ENCODE measurements at regions of chr15 and their contacts with region 1.

Region 1: GRCh38 chr15:90001683-90002427 is 731 bp downstream of the ZNF710 start:
- DNase-seq: peak; percentile 53
- H3K4me3 Mint-ChIP-seq: peak overlapping the region; percentile 85
- H3K27ac Mint-ChIP-seq: peak overlapping the region; percentile 86
- H3K4me1 Mint-ChIP-seq: peaks cover 53% of the 10 kb centered on the region
- H3K27me3 Mint-ChIP-seq: peaks cover 11% of the 10 kb centered on the region

Region 2: GRCh38 chr15:89416141-89416853 is 585.6 kb before region 1 on chr15:
- intact Hi-C with region 1: no loop called
- DNase-seq: peak; percentile 64
- H3K4me3 Mint-ChIP-seq: no peak overlapping the region
- H3K27ac Mint-ChIP-seq: no peak overlapping the region
- H3K4me1 Mint-ChIP-seq: peaks cover 10% of the 10 kb centered on the region
- H3K27me3 Mint-ChIP-seq: peaks cover 75% of the 10 kb centered on the region

Region 3: GRCh38 chr15:89750560-89751542 is 251.0 kb before region 1 on chr15 and contains the start of gene MESP1:
- intact Hi-C with region 1: loop called (anchors 5 kb)
- DNase-seq: peak; percentile 84
- H3K4me3 Mint-ChIP-seq: peak within 1 kb of the TSS; percentile 84
- H3K27ac Mint-ChIP-seq: peak within 1 kb of the TSS; percentile 23
- H3K4me1 Mint-ChIP-seq: no peaks in the 10 kb centered on the region
- H3K27me3 Mint-ChIP-seq: peaks cover 29% of the 10 kb centered on the region
- total RNA-seq, gene MESP1: 4.6 and 6.6 TPM in 2 replicates

Region 4: GRCh38 chr15:90013503-90013937 is 11.7 kb after region 1 on chr15:
- intact Hi-C with region 1: loop called (anchors 1 kb)
- DNase-seq: peak; percentile 36
- H3K4me3 Mint-ChIP-seq: peak overlapping the region; percentile 27
- H3K27ac Mint-ChIP-seq: peak overlapping the region; percentile 61
- H3K4me1 Mint-ChIP-seq: peaks cover 50% of the 10 kb centered on the region
- H3K27me3 Mint-ChIP-seq: no peaks in the 10 kb centered on the region

Region 5: GRCh38 chr15:90037961-90038631 is 36.2 kb after region 1 on chr15:
- intact Hi-C with region 1: loop called (anchors 1 kb)
- DNase-seq: peak; percentile 48
- H3K4me3 Mint-ChIP-seq: peak overlapping the region; percentile 63
- H3K27ac Mint-ChIP-seq: peak overlapping the region; percentile 89
- H3K4me1 Mint-ChIP-seq: peaks cover 77% of the 10 kb centered on the region
- H3K27me3 Mint-ChIP-seq: no peaks in the 10 kb centered on the region

Region 6: GRCh38 chr15:90059208-90059985 is 57.5 kb after region 1 on chr15:
- intact Hi-C with region 1: loop called (anchors 2 kb)
- DNase-seq: peak; percentile 69
- H3K4me3 Mint-ChIP-seq: peak overlapping the region; percentile 35
- H3K27ac Mint-ChIP-seq: peak overlapping the region; percentile 85
- H3K4me1 Mint-ChIP-seq: peaks cover 25% of the 10 kb centered on the region
- H3K27me3 Mint-ChIP-seq: no peaks in the 10 kb centered on the region

Region 7: DNA sequence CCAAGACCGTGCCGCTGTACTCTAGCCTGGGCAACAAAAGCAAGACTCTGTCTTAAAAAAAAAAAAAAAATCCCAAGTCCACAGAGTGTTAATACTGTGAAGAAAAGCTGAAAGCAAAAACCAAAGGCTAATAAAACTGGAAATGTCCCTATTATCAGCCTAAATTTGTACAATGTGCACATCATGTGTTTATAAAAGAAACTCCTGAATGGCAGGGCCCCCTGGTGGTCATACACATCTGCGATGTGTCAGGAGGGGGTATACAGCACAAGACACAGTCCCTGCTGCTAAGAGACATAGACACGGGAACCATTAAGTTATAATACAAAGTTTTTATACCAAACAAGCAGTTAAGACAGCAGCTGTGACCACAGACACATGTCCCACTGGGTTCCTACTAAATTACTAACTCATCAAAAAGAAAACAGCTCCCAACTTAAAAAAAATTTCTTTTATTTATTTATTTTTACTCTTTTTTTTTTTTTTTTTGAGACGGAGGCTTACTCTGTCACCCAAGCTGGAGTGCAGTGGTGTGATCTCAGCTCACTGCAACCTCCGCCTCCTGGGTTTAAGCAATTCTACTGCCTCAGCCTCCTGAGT is 69.5 kb after region 1 on chr15:
- intact Hi-C with region 1: loop called (anchors 1 kb)
- DNase-seq: peak; percentile 63
- H3K4me3 Mint-ChIP-seq: no peak overlapping the region
- H3K27ac Mint-ChIP-seq: peak overlapping the region; percentile 70
- H3K4me1 Mint-ChIP-seq: no peaks in the 10 kb centered on the region
- H3K27me3 Mint-ChIP-seq: no peaks in the 10 kb centered on the region

Region 8: DNA sequence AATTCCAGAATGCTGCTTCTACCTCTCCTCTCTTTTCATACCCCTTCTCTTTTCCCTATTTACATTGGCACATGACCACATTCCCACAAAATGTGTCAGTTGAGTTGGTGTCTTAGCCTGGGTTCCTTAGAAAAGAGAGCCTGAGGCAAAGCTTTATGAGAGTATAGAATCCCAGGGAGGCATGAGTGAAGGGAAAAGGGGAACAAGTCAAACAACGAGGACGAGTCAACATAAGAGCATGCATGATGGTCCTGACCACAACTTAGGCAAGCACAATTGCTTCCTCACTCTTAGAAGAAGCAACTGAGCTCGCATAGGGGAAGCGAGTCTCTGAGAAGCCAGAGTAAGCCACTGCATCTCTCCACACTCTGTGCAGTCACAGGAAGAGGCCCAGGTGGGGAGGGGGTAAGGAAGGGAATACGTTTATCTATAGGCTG is 334.9 kb after region 1 on chr15:
- intact Hi-C with region 1: no loop called
- DNase-seq: no peak
- H3K4me3 Mint-ChIP-seq: no peak overlapping the region
- H3K27ac Mint-ChIP-seq: no peak overlapping the region
- H3K4me1 Mint-ChIP-seq: peaks cover 18% of the 10 kb centered on the region
- H3K27me3 Mint-ChIP-seq: no peaks in the 10 kb centered on the region

Measured in activated T-helper 1 cell treated with anti-CD3 and anti-CD28 coated beads, Interleukin-12 subunit alpha, Interleukin-12 subunit beta, Interleukin-2, Interleukin-4 antibody, amounts not matched to agents 30 ng/mL and 10 ng/mL and 1 ng/mL, durations not matched to agents 14 hours and 24 hours and 36 hours (primary cell).